Natural killer cell (primary cell): ENCODE measurements at regions of chr9 and their contacts with region 1.

Region 1: GRCh38 chr9:37913480-37914153 is 9.7 kb upstream of the SLC25A51 start:
- DNase-seq: peak; percentile 80 to 85
- ATAC-seq: peak; percentile 88 to 95 (median 91)
- H3K4me3 ChIP-seq: no peak overlapping the region
- H3K4me3 Mint-ChIP-seq: no peak overlapping the region
- H3K27ac ChIP-seq: no peak overlapping the region
- H3K27ac Mint-ChIP-seq: no peak overlapping the region
- H3K4me1 ChIP-seq: peaks cover 13% of the 10 kb centered on the region
- H3K4me1 Mint-ChIP-seq: peaks cover 18 to 26% of the 10 kb centered on the region in 2 donors
- H3K27me3 ChIP-seq: no peaks in the 10 kb centered on the region
- H3K27me3 Mint-ChIP-seq: no peaks in the 10 kb centered on the region
- CTCF ChIP-seq: peak; percentile 97

Region 2: GRCh38 chr9:38068866-38069629 is 155.4 kb after region 1 on chr9 and contains the start of gene SHB:
- intact Hi-C with region 1: loop called (anchors 5 kb)
- DNase-seq: peak; percentile 68 to 89
- ATAC-seq: peak; percentile 82 to 85 (median 84)
- H3K4me3 ChIP-seq: peak within 1 kb of the TSS; percentile 75
- H3K4me3 Mint-ChIP-seq: peak within 1 kb of the TSS; percentile 91
- H3K27ac ChIP-seq: peak within 1 kb of the TSS; percentile 22
- H3K27ac Mint-ChIP-seq: peak within 1 kb of the TSS; percentile 75 to 84
- H3K4me1 ChIP-seq: peaks cover 28% of the 10 kb centered on the region
- H3K4me1 Mint-ChIP-seq: peaks cover 17 to 47% of the 10 kb centered on the region in 2 donors
- H3K27me3 ChIP-seq: peaks cover 11% of the 10 kb centered on the region
- H3K27me3 Mint-ChIP-seq: peaks cover 0 to 5% of the 10 kb centered on the region in 2 donors
- CTCF ChIP-seq: peak; percentile 34
- total RNA-seq, gene SHB: 2.7 to 7.1 (median 2.9) TPM

Region 3: GRCh38 chr9:38088006-38088925 is 174.6 kb after region 1 on chr9:
- intact Hi-C with region 1: loop called (anchors 1 kb)
- DNase-seq: peak; percentile 73 to 78
- ATAC-seq: peak; percentile 88 to 94 (median 88)
- H3K4me3 ChIP-seq: no peak overlapping the region
- H3K4me3 Mint-ChIP-seq: no peak overlapping the region
- H3K27ac ChIP-seq: no peak overlapping the region
- H3K27ac Mint-ChIP-seq: no peak overlapping the region
- H3K4me1 ChIP-seq: no peaks in the 10 kb centered on the region
- H3K4me1 Mint-ChIP-seq: peaks cover 5 to 6% of the 10 kb centered on the region in 2 donors
- H3K27me3 ChIP-seq: no peaks in the 10 kb centered on the region
- H3K27me3 Mint-ChIP-seq: peaks cover 13 to 30% of the 10 kb centered on the region in 2 donors
- CTCF ChIP-seq: peak; percentile 99

Region 4: GRCh38 chr9:38160613-38161215 is 247.1 kb after region 1 on chr9:
- intact Hi-C with region 1: loop called (anchors 5 kb)
- DNase-seq: peak; percentile 45 to 77
- ATAC-seq: peak in 2 of 3 donors; percentile 62 to 68
- H3K4me3 ChIP-seq: no peak overlapping the region
- H3K4me3 Mint-ChIP-seq: no peak overlapping the region
- H3K27ac ChIP-seq: no peak overlapping the region
- H3K27ac Mint-ChIP-seq: no peak overlapping the region
- H3K4me1 ChIP-seq: no peaks in the 10 kb centered on the region
- H3K4me1 Mint-ChIP-seq: peaks cover 0 to 9% of the 10 kb centered on the region in 2 donors
- H3K27me3 ChIP-seq: no peaks in the 10 kb centered on the region
- H3K27me3 Mint-ChIP-seq: peaks cover 0 to 6% of the 10 kb centered on the region in 2 donors
- CTCF ChIP-seq: peak; percentile 90

Region 5: GRCh38 chr9:38263532-38263931 is 349.9 kb after region 1 on chr9:
- intact Hi-C with region 1: loop called (anchors 1 kb)
- DNase-seq: peak in 1 of 2 donors; percentile 45
- ATAC-seq: peak in 1 of 3 donors; percentile 36
- H3K4me3 ChIP-seq: no peak overlapping the region
- H3K4me3 Mint-ChIP-seq: no peak overlapping the region
- H3K27ac ChIP-seq: no peak overlapping the region
- H3K27ac Mint-ChIP-seq: no peak overlapping the region
- H3K4me1 ChIP-seq: no peaks in the 10 kb centered on the region
- H3K4me1 Mint-ChIP-seq: no peaks in the 10 kb centered on the region
- H3K27me3 ChIP-seq: peaks cover 2% of the 10 kb centered on the region
- H3K27me3 Mint-ChIP-seq: peaks cover 18 to 59% of the 10 kb centered on the region in 2 donors
- CTCF ChIP-seq: peak; percentile 63

Region 6: DNA sequence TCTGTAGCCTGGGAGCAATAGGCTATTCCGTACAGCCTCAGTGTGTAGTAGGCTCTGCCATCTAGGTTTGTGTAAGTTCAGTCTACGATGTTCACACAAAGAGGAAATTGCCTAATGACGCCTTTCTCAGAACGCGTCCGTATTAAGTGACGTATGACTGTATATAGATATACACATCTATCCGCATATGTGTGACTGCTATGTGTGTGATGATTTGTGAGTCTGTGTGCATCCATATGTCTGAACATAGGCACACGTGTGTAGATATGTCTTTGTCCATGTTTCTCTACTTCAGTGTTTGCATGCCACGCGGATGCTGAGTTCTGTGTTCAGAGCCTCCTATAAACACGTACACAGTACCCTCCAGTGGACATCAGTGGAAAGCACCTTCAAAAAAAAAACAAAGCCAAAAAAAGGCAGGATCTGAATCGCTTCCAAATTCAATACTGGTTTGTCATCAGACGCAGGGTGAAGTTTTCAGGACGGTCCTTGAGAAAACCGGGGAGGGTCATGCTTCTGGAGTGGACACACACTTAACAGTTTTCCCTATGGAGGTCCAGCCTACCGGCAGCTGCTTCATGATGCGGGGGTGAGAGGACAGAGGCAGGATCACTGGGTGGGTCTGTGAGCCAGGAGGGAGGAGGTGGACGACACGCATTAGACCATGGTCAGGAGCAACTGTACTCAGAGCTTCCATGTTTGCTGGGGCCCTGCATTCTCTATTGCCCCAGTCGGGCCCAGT is 449.4 kb after region 1 on chr9:
- intact Hi-C with region 1: loop called (anchors 1 kb)
- DNase-seq: peak in 1 of 2 donors; percentile 61
- ATAC-seq: peak; percentile 68 to 89 (median 89)
- H3K4me3 ChIP-seq: no peak overlapping the region
- H3K4me3 Mint-ChIP-seq: peak overlapping the region; percentile 75
- H3K27ac ChIP-seq: no peak overlapping the region
- H3K27ac Mint-ChIP-seq: peak overlapping the region in 1 of 2 donors; percentile 72
- H3K4me1 ChIP-seq: peaks cover 3% of the 10 kb centered on the region
- H3K4me1 Mint-ChIP-seq: peaks cover 7 to 8% of the 10 kb centered on the region in 2 donors
- H3K27me3 ChIP-seq: no peaks in the 10 kb centered on the region
- H3K27me3 Mint-ChIP-seq: peaks cover 4 to 13% of the 10 kb centered on the region in 2 donors
- CTCF ChIP-seq: peak; percentile 51

Region 7: DNA sequence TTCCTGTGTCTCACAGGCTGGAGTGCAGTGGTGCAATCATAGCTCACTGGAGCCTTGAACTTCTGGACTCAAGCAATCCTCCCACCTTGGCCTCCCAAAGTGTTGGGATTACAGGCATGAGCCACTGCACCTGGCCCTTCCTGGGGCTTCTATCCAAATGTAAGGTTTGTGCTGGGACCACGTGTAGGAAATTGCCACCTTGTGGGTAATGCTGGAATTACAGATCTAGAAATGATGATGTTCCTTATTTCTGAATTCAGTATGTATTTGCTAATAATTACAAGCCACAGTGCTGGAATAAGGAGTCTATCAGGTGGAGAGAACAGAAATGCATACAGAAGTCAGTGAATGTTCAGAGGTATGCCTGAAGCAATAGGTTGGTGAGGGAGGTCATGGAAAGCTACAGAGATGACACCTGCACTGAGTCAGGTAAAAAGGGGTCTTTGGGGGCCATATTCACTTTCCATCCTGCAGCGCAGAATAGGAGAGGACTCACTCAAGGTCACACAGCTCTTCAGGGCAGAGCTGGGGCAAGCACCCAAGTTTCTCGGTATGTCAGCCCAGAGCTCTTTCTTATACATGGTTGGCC is 519.4 kb after region 1 on chr9:
- intact Hi-C with region 1: loop called (anchors 1 kb)
- DNase-seq: peak in 1 of 2 donors; percentile 61
- ATAC-seq: peak in 1 of 3 donors; percentile 34
- H3K4me3 ChIP-seq: no peak overlapping the region
- H3K4me3 Mint-ChIP-seq: no peak overlapping the region
- H3K27ac ChIP-seq: no peak overlapping the region
- H3K27ac Mint-ChIP-seq: no peak overlapping the region
- H3K4me1 ChIP-seq: no peaks in the 10 kb centered on the region
- H3K4me1 Mint-ChIP-seq: peaks cover 0 to 6% of the 10 kb centered on the region in 2 donors
- H3K27me3 ChIP-seq: no peaks in the 10 kb centered on the region
- H3K27me3 Mint-ChIP-seq: peaks cover 8 to 18% of the 10 kb centered on the region in 2 donors
- CTCF ChIP-seq: peak; percentile 71